ENCODE measurements at regions of chr6 and their contacts with region 1.

Region 1: DNA sequence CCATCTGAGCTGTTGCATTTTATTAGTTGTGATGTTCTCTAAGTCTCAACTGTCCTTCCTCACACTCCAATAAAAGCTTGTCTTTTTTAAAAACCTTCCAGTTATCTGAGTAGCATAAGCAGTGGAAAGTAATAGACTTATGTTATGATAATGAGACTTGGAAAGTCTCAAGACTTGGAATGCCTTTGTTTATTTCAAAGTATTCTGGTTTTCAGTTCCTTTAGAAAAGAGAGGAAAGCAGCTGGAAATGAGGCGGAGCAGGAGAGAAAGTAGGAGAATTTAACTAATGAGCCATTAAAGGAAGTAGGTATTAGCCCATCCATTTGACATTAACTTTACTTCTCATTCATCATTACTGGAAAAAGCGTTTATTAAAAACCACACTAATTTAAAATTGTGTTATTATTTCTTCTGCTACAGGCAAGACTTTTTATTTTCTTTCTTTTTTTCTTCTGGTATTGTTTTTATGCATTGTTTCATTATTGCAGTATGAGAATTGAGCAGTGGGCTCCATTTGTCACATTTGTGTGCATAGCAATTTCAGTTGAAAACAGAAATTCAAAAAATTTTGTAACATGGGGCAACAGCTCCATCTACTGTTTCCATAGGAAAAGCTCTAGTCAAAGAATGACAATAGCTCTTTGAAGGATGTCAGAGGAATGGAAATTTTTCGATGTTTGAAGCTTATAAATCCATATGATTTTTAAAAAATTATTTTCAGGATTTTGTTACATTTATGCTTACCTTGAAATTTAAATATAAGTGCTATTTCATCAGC is 194.8 kb downstream of the COL9A1 start:
- DNase-seq: no peak
- H3K4me3 ChIP-seq: no peak overlapping the region
- H3K27ac ChIP-seq: no peak overlapping the region
- H3K4me1 ChIP-seq: peaks cover 0 to 3% (median 1%) of the 10 kb centered on the region in 4 experiments; a peak in 3 of 7 replicates
- H3K27me3 ChIP-seq: no peaks in the 10 kb centered on the region
- CTCF ChIP-seq: peak in 2 of 3 experiments; percentile 45 to 53; a peak in 2 of 4 replicates
- EP300 ChIP-seq: no peak
- POLR2A ChIP-seq: no peak
- RAD21 ChIP-seq: peak; percentile 81 to 84

Region 2: GRCh38 chr6:69900892-69901291 is 207.1 kb before region 1 on chr6:
- CTCF ChIA-PET with region 1: no interaction called
- POLR2A ChIA-PET with region 1: no interaction called
- DNase-seq: no peak
- H3K4me3 ChIP-seq: no peak overlapping the region
- H3K27ac ChIP-seq: no peak overlapping the region
- H3K4me1 ChIP-seq: no peaks in the 10 kb centered on the region; a peak in 2 of 7 replicates
- H3K27me3 ChIP-seq: no peaks in the 10 kb centered on the region
- CTCF ChIP-seq: no peak
- EP300 ChIP-seq: no peak
- POLR2A ChIP-seq: no peak
- RAD21 ChIP-seq: no peak

Region 3: GRCh38 chr6:70094156-70094555 is 13.9 kb before region 1 on chr6:
- CTCF ChIA-PET with region 1: interaction called, 11 read pairs
- POLR2A ChIA-PET with region 1: no interaction called
- DNase-seq: no peak
- H3K4me3 ChIP-seq: no peak overlapping the region
- H3K27ac ChIP-seq: no peak overlapping the region
- H3K4me1 ChIP-seq: no peaks in the 10 kb centered on the region
- H3K27me3 ChIP-seq: no peaks in the 10 kb centered on the region
- CTCF ChIP-seq: no peak
- EP300 ChIP-seq: no peak
- POLR2A ChIP-seq: no peak
- RAD21 ChIP-seq: no peak

Region 4: DNA sequence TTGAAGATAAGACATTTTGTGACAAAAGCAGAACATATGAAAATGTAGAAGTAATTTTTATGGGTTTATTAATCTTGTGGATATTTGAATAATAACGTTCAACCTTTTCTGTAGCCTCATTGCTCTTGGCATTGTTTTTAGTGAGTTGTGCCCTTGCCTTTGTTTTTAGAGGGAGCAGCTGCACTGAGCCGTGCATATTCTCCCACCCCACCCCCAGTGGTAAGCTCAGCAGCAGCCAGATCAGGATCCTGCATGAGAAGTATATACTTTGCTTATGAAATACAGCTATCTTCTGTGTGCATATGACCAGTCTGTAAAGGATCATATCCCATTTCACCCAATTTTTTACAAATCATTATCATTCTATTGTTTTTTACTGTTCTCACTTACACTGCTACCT is 10.6 kb after region 1 on chr6:
- CTCF ChIA-PET with region 1: interaction called, 25 read pairs
- POLR2A ChIA-PET with region 1: no interaction called
- DNase-seq: no peak
- H3K4me3 ChIP-seq: no peak overlapping the region
- H3K27ac ChIP-seq: no peak overlapping the region
- H3K4me1 ChIP-seq: no peaks in the 10 kb centered on the region
- H3K27me3 ChIP-seq: no peaks in the 10 kb centered on the region
- CTCF ChIP-seq: no peak
- EP300 ChIP-seq: no peak
- POLR2A ChIP-seq: no peak
- RAD21 ChIP-seq: no peak

Region 5: GRCh38 chr6:70142034-70142433 is 34.0 kb after region 1 on chr6:
- CTCF ChIA-PET with region 1: interaction called, 10 read pairs
- POLR2A ChIA-PET with region 1: no interaction called
- DNase-seq: no peak
- H3K4me3 ChIP-seq: no peak overlapping the region
- H3K27ac ChIP-seq: no peak overlapping the region
- H3K4me1 ChIP-seq: peaks cover 0 to 6% (median under 1%) of the 10 kb centered on the region in 4 experiments; a peak in 2 of 7 replicates
- H3K27me3 ChIP-seq: no peaks in the 10 kb centered on the region
- CTCF ChIP-seq: no peak
- EP300 ChIP-seq: no peak
- POLR2A ChIP-seq: no peak
- RAD21 ChIP-seq: no peak

Region 6: DNA sequence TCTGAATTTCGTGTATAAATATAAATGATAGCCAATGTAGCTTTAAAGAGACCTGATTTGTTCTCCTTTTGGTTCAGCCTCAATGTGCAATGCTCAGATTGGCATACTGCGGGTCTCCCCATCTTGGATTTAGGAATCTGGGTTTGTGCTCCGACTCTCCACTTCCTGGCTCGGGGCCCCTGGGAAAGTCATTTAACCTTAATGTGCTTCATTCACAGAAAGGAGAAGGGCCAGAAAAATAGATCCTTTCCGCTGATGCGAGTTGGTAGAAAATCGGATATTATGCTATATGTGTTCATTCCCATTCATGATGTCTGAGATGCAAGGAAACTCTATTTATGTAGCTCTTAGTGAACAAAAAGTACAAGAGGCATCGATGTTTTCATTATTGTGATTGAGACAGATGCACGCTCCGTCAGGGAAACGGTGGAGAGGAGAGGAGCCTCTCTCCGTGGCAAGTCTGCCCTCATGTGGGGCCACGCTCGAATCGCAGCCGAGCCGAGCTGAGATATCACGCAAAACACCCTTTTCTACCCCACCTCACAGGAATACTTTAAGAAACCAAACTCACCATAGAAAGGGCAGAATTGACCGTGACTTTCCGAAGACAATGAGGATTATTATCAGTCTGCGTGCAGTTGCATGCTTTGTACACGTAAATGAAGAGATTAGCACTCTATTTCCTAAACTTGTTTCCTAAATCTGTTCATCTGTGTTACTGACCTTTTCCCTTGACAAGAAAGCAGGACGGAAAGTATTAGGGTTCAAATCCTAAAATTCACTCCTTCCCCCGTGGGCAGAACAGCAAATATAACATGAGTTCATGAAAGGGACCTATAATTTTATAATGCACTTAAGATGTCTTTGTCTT is 58.3 kb after region 1 on chr6:
- CTCF ChIA-PET with region 1: interaction called, 13 read pairs
- POLR2A ChIA-PET with region 1: no interaction called
- DNase-seq: peak; percentile 17 to 79
- H3K4me3 ChIP-seq: peak overlapping the region in 2 of 4 experiments; percentile 17 to 45; a peak in 2 of 8 replicates
- H3K27ac ChIP-seq: no peak overlapping the region
- H3K4me1 ChIP-seq: no peaks in the 10 kb centered on the region
- H3K27me3 ChIP-seq: no peaks in the 10 kb centered on the region
- CTCF ChIP-seq: peak; percentile 67 to 93 (median 85)
- EP300 ChIP-seq: no peak
- POLR2A ChIP-seq: no peak
- RAD21 ChIP-seq: peak; percentile 91 to 94

Region 7: DNA sequence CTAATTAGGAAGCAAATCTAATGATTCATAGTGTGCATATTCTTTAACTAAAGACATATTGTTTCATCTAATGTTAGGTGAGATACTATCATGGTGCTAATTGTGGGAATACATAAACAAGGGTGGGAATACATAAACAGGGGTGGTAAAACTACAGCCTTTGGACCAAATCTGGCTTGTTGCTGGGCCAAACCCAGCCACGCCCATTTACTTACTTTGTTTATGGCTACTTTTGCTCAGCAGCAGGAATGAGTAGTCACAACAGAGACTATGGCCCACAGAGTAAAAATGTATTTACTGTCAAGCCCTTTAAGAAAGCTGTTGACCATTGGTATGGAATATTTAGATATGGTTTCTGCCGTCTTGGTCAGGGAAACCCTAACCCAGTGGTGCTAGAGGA is 337.0 kb after region 1 on chr6:
- CTCF ChIA-PET with region 1: no interaction called
- POLR2A ChIA-PET with region 1: no interaction called
- DNase-seq: no peak
- H3K4me3 ChIP-seq: no peak overlapping the region
- H3K27ac ChIP-seq: no peak overlapping the region
- H3K4me1 ChIP-seq: no peaks in the 10 kb centered on the region
- H3K27me3 ChIP-seq: no peaks in the 10 kb centered on the region
- CTCF ChIP-seq: no peak
- EP300 ChIP-seq: no peak
- POLR2A ChIP-seq: no peak
- RAD21 ChIP-seq: no peak

Measured in H1 (cell line).